ENCODE measurements at regions of chr1 and their contacts with region 1.

Region 1: DNA sequence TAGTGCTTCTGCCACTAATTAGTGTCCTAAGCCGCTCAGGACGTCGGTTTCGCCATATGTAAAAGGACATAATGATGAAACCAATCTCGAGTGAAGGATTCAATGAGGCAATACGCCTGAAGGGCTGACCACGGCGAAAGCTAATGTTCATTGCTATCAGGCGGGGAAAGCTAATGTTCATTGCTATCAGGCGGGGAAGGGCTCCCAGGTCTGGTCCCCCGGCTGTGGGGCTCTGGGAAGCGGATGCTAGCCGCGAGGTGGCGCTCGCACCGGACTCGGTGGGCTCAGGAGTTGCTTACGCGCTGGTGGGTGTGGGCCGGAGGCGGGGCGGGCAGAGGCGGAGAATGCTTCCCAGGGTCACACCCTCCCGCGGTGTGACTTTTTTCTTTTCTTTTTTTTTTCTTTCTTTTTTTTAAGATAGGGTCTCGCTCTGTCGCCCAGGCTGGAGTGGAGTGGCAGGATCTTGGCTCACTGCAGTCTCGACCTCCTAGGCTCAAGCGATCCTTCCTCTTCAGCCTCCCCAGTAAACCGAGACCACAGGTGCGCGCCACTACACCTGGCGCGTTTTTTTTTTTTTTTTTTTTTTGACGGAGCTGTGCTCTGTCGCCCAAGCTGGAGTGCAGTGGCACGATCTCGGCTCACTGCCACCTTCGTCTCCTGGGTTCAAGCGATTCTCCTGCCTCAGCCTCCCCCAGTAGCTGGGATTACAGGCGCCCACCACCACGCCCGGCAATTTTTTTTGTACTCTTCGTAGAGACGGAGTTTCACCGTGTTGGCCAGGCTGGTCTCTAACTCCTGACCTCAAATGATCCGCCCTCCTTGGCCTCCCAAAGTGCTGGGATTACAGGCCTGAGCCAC is 1.1 kb upstream of the PEAR1 start:
- DNase-seq: peak; percentile 75
- ATAC-seq: peak; percentile 77
- H3K4me3 ChIP-seq: peak overlapping the region in 1 of 2 experiments; percentile 18; a peak in 1 of 4 replicates
- H3K27ac ChIP-seq: no peak overlapping the region
- H3K4me1 ChIP-seq: peaks cover 24 to 60% of the 10 kb centered on the region in 2 experiments
- H3K27me3 ChIP-seq: no peaks in the 10 kb centered on the region
- CTCF ChIP-seq: peak in 2 of 3 experiments; percentile 86 to 89; a peak in 4 of 6 replicates
- POLR2A ChIP-seq: no peak
- RAD21 ChIP-seq: no peak

Region 2: GRCh38 chr1:156797212-156797871 is 95.1 kb before region 1 on chr1:
- CTCF ChIA-PET with region 1: no interaction called
- POLR2A ChIA-PET with region 1: no interaction called
- RAD21 ChIA-PET with region 1: interaction called in 1 of 2 experiments, 3 read pairs
- intact Hi-C with region 1: loop called (anchors 1 kb)
- DNase-seq: peak; percentile 33
- ATAC-seq: peak; percentile 84
- H3K4me3 ChIP-seq: no peak overlapping the region
- H3K27ac ChIP-seq: no peak overlapping the region
- H3K4me1 ChIP-seq: peaks cover 2 to 8% of the 10 kb centered on the region in 2 experiments; a peak in 2 of 4 replicates
- H3K27me3 ChIP-seq: no peaks in the 10 kb centered on the region
- CTCF ChIP-seq: peak; percentile 65 to 91 (median 82); a peak in 5 of 6 replicates
- POLR2A ChIP-seq: no peak
- RAD21 ChIP-seq: peak; percentile 74

Region 3: DNA sequence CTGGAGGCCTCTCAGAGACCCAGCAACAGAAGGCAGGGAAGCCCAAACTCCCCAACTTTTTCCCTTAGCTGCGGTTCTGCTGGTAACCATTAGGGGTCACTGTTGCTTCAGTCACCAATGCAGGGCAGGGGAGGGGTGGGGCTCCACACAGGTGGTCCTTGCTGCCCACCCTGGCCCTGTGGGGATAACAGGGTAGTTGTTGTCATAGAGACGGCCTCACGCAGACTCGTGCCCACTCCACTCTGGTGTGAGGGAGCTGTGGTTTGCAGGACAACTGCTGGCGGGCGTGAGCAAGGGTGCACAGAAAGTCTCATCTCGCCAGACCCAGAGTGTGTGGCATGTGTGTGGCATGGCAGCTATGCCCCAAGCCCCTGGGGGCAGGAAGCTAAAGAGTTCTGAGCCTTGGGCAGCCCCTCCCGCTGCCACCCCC is 53.4 kb before region 1 on chr1:
- CTCF ChIA-PET with region 1: interaction called, 10 read pairs
- POLR2A ChIA-PET with region 1: interaction called, 3 read pairs
- RAD21 ChIA-PET with region 1: no interaction called
- intact Hi-C with region 1: loop called (anchors 2 kb)
- DNase-seq: no peak
- ATAC-seq: peak; percentile 86
- H3K4me3 ChIP-seq: no peak overlapping the region
- H3K27ac ChIP-seq: no peak overlapping the region
- H3K4me1 ChIP-seq: no peaks in the 10 kb centered on the region
- H3K27me3 ChIP-seq: peaks cover 5% of the 10 kb centered on the region; the same call in 1 of the 2 replicates
- CTCF ChIP-seq: peak; percentile 72 to 98 (median 95); a peak in 5 of 6 replicates
- POLR2A ChIP-seq: no peak
- RAD21 ChIP-seq: peak; percentile 83

Region 4: DNA sequence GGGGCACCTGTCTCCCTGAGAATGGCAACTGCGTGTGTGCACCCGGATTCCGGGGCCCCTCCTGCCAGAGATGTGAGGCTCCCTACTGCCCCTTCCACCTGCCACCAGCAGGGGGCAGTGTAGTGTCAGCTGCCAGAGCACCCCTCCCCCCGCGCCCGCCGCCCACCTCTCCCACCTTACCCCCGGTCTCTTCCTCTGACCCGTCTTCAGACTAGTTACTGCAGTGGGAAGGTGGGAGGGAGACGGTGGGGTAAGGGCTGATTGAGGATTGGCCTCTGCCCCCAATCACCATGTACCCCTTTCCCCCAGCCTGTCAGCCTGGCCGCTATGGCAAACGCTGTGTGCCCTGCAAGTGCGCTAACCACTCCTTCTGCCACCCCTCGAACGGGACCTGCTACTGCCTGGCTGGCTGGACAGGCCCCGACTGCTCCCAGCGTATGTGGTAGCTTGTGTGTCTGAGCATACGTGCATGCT is 17.9 kb after region 1 on chr1:
- CTCF ChIA-PET with region 1: no interaction called
- POLR2A ChIA-PET with region 1: no interaction called
- RAD21 ChIA-PET with region 1: no interaction called
- intact Hi-C with region 1: no loop called
- DNase-seq: no peak
- ATAC-seq: 0 out of 2 replicates have a peak, but pooled peaks have one; percentile 23
- H3K4me3 ChIP-seq: no peak overlapping the region
- H3K27ac ChIP-seq: no peak overlapping the region
- H3K4me1 ChIP-seq: peaks cover 6 to 27% of the 10 kb centered on the region in 2 experiments; a peak in 3 of 4 replicates
- H3K27me3 ChIP-seq: no peaks in the 10 kb centered on the region
- CTCF ChIP-seq: peak; percentile 30 to 90 (median 84); a peak in 5 of 6 replicates
- POLR2A ChIP-seq: no peak
- RAD21 ChIP-seq: no peak

Region 5: DNA sequence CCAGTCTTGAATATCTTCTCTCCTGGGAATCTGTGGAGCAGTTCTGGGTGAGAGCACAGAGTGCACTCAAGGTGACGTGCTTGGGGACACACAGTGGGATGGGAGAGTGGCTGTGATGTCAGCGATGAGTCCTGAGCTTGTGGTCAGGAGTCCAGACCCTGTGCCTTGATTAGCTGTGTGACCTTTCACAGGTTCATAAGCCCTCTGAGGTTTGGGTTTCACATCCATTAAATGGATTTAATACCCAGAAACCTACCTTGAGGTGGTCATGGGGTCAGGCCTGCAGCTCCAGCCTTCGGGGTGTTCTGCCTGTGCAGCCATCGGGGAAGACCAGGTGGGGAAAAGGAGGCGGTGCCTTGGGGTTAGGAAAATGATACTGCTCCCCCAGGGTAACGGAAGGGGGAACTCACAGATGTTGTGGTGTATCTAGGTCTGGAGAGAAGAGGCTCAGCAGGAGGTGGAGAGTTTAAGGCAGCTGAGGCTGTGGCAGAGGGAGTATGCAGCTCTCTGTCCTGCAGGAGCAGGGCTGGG is 284.2 kb after region 1 on chr1:
- CTCF ChIA-PET with region 1: no interaction called
- POLR2A ChIA-PET with region 1: no interaction called
- RAD21 ChIA-PET with region 1: no interaction called
- intact Hi-C with region 1: no loop called
- DNase-seq: no peak
- ATAC-seq: no peak
- H3K4me3 ChIP-seq: no peak overlapping the region
- H3K27ac ChIP-seq: no peak overlapping the region
- H3K4me1 ChIP-seq: peaks cover 0 to 2% of the 10 kb centered on the region in 2 experiments; a peak in 1 of 4 replicates
- H3K27me3 ChIP-seq: peaks cover 28% of the 10 kb centered on the region
- CTCF ChIP-seq: no peak
- POLR2A ChIP-seq: no peak
- RAD21 ChIP-seq: no peak

Measured in HCT116 (cell line).